B cell (primary cell): ENCODE measurements at regions of chr4 and their contacts with region 1.

Region 1: GRCh38 chr4:74932816-74933561 is at the start of gene PARM1:
- DNase-seq: peak; percentile 87
- ATAC-seq: peak; percentile 84
- H3K4me3 ChIP-seq: peak within 1 kb of the TSS; percentile 12 to 88 (median 73)
- H3K4me3 Mint-ChIP-seq: peak within 1 kb of the TSS; percentile 98
- H3K27ac ChIP-seq: peak within 1 kb of the TSS; percentile 64 to 70
- H3K27ac Mint-ChIP-seq: peak within 1 kb of the TSS; percentile 95
- H3K4me1 ChIP-seq: peaks cover 27 to 42% of the 10 kb centered on the region in 2 donors
- H3K4me1 Mint-ChIP-seq: peaks cover 37% of the 10 kb centered on the region
- H3K27me3 ChIP-seq: peaks cover 0 to 24% (median 11%) of the 10 kb centered on the region in 4 experiments
- H3K27me3 Mint-ChIP-seq: peaks cover 2% of the 10 kb centered on the region
- CTCF ChIP-seq: peak; percentile 68
- total RNA-seq, gene PARM1: 6.6 and 7.8 TPM in 2 replicates

Region 2: GRCh38 chr4:75118739-75119138 is 185.8 kb after region 1 on chr4:
- CTCF ChIA-PET with region 1: interaction called, 15 read pairs
- POLR2A ChIA-PET with region 1: no interaction called
- intact Hi-C with region 1: loop called (anchors 5 kb)
- DNase-seq: no peak
- ATAC-seq: no peak
- H3K4me3 ChIP-seq: no peak overlapping the region
- H3K4me3 Mint-ChIP-seq: no peak overlapping the region
- H3K27ac ChIP-seq: no peak overlapping the region
- H3K27ac Mint-ChIP-seq: no peak overlapping the region
- H3K4me1 ChIP-seq: no peaks in the 10 kb centered on the region
- H3K4me1 Mint-ChIP-seq: peaks cover 7% of the 10 kb centered on the region
- H3K27me3 ChIP-seq: no peaks in the 10 kb centered on the region
- H3K27me3 Mint-ChIP-seq: no peaks in the 10 kb centered on the region
- CTCF ChIP-seq: no peak

Region 3: GRCh38 chr4:75289914-75290582 is 357.1 kb after region 1 on chr4:
- CTCF ChIA-PET with region 1: interaction called, 36 read pairs
- POLR2A ChIA-PET with region 1: no interaction called
- intact Hi-C with region 1: loop called (anchors 1 kb)
- DNase-seq: peak; percentile 58
- ATAC-seq: no peak
- H3K4me3 ChIP-seq: no peak overlapping the region
- H3K4me3 Mint-ChIP-seq: no peak overlapping the region
- H3K27ac ChIP-seq: no peak overlapping the region
- H3K27ac Mint-ChIP-seq: no peak overlapping the region
- H3K4me1 ChIP-seq: no peaks in the 10 kb centered on the region
- H3K4me1 Mint-ChIP-seq: peaks cover 5% of the 10 kb centered on the region
- H3K27me3 ChIP-seq: no peaks in the 10 kb centered on the region
- H3K27me3 Mint-ChIP-seq: peaks cover 5% of the 10 kb centered on the region
- CTCF ChIP-seq: peak; percentile 50

Region 4: DNA sequence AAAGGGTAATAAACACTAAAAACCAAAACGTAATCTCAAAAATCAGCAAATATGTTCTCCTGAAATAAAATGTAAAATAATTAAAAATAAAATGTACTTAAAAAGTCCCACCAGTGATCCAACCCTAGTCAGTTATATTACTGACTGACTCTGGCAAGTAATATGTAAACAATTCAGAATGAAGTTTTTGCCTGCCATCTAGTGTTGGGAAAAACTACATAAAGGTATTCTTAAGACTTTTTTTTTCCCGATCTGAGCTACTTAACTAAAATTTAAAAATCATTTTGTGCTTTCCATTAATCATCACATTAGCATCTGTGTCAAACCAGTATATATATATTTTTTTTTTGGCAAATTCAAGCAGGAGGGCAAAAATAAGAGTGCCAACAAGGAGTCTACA is 557.2 kb after region 1 on chr4:
- CTCF ChIA-PET with region 1: interaction called, 8 read pairs
- POLR2A ChIA-PET with region 1: no interaction called
- intact Hi-C with region 1: loop called (anchors 1 kb)
- DNase-seq: peak; percentile 20
- ATAC-seq: no peak
- H3K4me3 ChIP-seq: no peak overlapping the region
- H3K4me3 Mint-ChIP-seq: no peak overlapping the region
- H3K27ac ChIP-seq: no peak overlapping the region
- H3K27ac Mint-ChIP-seq: no peak overlapping the region
- H3K4me1 ChIP-seq: no peaks in the 10 kb centered on the region
- H3K4me1 Mint-ChIP-seq: no peaks in the 10 kb centered on the region
- H3K27me3 ChIP-seq: no peaks in the 10 kb centered on the region
- H3K27me3 Mint-ChIP-seq: no peaks in the 10 kb centered on the region
- CTCF ChIP-seq: peak; percentile 22